ENCODE measurements at regions of chr16 and their contacts with region 1.

Region 1: DNA sequence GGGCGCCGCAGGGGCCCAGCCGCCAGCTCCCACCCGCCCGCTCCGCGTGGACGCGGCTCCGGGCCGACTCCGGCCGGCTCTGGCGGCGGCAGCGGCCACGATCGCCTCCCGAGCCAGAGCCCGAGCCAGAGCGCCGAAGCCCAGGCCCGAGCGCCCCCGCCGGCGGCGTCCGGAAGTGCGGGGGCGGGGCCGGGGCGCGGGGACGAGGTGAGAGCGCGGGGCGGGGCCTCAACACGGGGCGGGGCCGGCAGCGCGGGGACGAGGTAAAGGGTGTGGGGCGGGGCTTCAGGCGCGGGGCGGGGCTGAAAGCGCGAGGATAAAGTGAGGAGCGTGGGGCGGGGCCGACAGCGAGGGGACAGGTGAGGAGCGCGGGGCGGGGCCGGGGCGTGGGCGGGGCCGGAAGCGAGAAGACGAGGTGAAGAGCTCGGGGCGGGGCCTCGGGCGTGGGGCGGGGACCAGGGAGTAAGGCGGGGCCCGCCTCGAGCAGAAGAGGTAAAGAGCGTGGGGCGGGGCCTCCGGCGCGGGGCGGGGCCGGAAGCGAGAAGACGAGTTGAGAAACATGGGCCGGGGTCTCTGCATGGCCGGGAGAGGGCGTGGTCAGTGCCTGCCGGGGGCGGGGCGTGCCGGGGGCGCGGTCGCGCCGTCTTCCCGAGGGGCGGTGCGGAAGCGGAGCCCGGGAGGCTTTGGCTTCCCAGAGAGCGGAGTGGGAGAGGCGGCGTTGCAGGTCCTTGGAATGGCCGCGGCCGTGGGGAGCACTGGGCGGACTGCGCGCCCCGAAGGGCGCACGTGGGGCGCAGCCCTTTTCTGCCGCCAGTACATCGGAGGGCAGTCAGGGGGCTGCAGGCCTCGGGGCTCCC is at the start of gene AXIN1:
- DNase-seq: peak; percentile 100
- H3K4me3 Mint-ChIP-seq: peak within 1 kb of the TSS; percentile 89
- H3K27ac Mint-ChIP-seq: peak within 1 kb of the TSS; percentile 86
- H3K4me1 Mint-ChIP-seq: peaks cover 48% of the 10 kb centered on the region
- H3K27me3 Mint-ChIP-seq: no peaks in the 10 kb centered on the region
- total RNA-seq, gene AXIN1: 25.4 to 25.7 TPM

Region 2: GRCh38 chr16:228818-229730 is 123.7 kb before region 1 on chr16 and contains the start of gene LUC7L:
- CTCF ChIA-PET with region 1: interaction called, 13 read pairs
- POLR2A ChIA-PET with region 1: interaction called, 5 read pairs
- DNase-seq: peak; percentile 86
- H3K4me3 Mint-ChIP-seq: peak within 1 kb of the TSS; percentile 83
- H3K27ac Mint-ChIP-seq: peak within 1 kb of the TSS; percentile 87
- H3K4me1 Mint-ChIP-seq: peaks cover 34% of the 10 kb centered on the region
- H3K27me3 Mint-ChIP-seq: no peaks in the 10 kb centered on the region
- total RNA-seq, gene LUC7L: 54.9 to 61.0 TPM

Region 3: DNA sequence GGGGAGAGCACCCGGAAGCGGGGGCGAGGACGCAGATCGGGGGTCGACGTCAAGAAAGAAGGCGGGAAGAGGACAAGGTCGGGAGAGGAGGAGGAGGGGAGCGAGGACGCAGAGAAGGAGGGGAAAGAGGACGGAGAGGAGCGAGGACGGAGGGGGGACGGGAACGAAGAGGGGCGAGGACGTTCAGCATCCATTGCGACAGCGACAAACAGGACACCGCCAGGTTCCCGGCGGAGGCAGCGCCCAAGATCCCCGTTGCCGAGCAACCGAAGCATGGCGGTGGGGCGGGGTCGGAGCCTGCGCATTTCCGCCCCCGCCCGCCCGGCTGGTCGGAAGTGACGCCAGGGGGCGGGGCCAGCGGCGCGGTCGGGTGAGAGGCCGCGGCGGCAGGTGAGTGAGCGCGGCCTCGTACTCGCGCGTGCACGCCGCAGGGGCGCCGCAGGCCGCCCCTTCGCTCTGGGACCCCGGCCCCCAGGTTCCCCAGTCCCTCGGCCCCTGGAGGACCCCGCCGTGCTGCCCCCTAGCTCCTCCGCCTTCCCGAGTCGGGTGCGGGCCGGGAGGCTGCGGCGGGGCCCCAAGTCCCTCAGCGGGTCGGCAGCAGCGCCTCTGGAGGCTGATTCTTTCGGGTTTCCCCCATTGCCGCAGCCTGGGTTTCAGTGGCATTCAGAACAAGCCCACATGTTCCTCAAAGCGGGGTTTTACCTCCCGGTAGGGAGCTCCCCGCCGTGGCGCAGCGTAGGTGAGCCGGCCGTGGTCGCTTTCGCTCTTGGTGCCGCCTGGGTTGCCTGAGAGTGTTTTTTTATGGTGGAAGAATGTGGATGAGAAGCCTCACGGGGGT is 118.1 kb before region 1 on chr16 and contains the start of gene FAM234A:
- CTCF ChIA-PET with region 1: interaction called, 13 read pairs
- POLR2A ChIA-PET with region 1: interaction called, 15 read pairs
- DNase-seq: peak; percentile 95
- H3K4me3 Mint-ChIP-seq: peak within 1 kb of the TSS; percentile 91
- H3K27ac Mint-ChIP-seq: peak within 1 kb of the TSS; percentile 94
- H3K4me1 Mint-ChIP-seq: peaks cover 20% of the 10 kb centered on the region
- H3K27me3 Mint-ChIP-seq: no peaks in the 10 kb centered on the region
- total RNA-seq, gene FAM234A: 26.9 to 31.5 TPM

Region 4: DNA sequence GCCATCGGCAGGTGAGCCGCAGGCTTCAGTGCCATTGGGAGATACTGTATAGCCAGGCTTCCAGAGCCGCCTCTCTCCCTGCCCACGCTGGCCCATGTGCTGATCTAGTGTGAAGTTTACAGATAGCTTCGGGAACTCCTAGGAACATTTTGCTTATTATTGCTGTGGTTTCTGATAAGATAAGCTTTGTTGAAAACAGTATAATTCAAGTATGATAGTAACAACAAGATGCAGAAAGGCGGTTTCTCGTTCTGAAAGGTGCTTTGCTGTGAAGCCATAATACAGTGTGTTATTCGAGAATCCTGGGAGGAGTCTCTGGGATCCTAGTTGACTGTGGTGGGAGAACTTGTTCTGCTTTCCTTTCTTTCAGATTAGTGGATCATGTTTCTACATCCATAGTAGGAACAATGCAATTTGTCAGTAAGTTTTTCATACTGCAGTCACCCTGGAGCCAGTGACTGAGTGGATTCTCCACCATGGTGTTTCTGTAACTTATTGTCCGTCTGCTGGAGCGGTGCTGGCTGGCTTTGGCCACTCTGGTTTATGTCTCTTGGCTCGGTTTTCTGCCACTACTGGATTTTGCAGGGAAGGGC is 104.2 kb after region 1 on chr16:
- CTCF ChIA-PET with region 1: no interaction called
- POLR2A ChIA-PET with region 1: no interaction called
- DNase-seq: no peak
- H3K4me3 Mint-ChIP-seq: no peak overlapping the region
- H3K27ac Mint-ChIP-seq: no peak overlapping the region
- H3K4me1 Mint-ChIP-seq: peaks cover 5% of the 10 kb centered on the region
- H3K27me3 Mint-ChIP-seq: no peaks in the 10 kb centered on the region

Measured in activated CD4-positive, alpha-beta memory T cell treated with anti-CD3 and anti-CD28 coated beads, Interleukin-2, amount 10 ng/mL, durations not matched to agents 7 days and 5 days (primary cell).